PC-3 (cell line): ENCODE measurements at regions of chr1 and their contacts with region 1.

Region 1: DNA sequence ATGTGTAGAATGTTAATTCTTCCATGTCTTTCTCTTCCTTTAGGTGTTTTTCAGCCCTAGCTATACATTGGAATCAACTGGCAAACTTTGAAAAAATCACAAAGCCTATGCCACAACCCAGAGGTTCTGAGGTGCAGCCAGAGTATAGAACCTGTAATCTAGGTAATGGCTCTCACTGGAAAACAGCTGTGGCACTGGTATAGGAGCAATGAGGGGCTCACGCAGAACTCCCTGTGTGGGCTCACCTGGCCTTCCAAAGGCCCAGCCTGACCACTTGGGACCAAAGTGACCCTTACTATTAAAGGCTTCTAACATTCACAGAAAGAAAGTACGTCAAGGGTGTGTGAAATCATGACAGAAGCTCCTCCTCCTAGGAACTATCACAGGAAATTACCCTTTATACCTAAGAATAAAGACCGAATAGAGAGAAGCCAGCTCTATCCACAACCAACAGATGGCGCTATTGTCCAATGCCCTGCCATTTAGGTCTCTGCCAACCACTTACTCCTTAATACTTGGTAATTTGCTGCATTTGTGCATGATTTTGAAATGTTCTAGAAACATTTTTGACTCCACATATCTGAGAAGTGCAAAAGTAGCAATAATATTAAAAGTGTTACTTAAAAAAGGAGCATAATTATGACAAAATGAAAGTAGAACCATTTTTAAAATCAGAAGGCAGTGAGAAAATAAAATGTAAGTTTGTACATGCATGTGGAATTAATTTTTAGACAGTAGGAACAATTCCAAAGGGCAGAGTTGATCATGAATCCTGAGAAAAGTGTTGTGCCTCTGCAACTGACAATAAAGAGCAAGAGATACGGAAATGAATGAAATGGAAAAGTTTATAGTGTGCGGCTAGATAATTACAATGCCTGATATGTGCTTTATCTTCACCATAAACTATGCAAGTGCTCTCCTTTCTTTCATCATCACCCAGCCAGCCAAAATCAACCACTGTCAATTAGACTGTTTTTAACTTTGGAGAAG is 93.1 kb upstream of the HAO2 start:
- DNase-seq: peak; percentile 78
- ATAC-seq: peak; percentile 35; the same call in 1 of the 2 replicates
- H3K4me3 ChIP-seq: no peak overlapping the region
- H3K27ac ChIP-seq: no peak overlapping the region
- H3K4me1 ChIP-seq: peaks cover 17% of the 10 kb centered on the region
- H3K27me3 ChIP-seq: no peaks in the 10 kb centered on the region
- CTCF ChIP-seq: peak; percentile 94

Region 2: DNA sequence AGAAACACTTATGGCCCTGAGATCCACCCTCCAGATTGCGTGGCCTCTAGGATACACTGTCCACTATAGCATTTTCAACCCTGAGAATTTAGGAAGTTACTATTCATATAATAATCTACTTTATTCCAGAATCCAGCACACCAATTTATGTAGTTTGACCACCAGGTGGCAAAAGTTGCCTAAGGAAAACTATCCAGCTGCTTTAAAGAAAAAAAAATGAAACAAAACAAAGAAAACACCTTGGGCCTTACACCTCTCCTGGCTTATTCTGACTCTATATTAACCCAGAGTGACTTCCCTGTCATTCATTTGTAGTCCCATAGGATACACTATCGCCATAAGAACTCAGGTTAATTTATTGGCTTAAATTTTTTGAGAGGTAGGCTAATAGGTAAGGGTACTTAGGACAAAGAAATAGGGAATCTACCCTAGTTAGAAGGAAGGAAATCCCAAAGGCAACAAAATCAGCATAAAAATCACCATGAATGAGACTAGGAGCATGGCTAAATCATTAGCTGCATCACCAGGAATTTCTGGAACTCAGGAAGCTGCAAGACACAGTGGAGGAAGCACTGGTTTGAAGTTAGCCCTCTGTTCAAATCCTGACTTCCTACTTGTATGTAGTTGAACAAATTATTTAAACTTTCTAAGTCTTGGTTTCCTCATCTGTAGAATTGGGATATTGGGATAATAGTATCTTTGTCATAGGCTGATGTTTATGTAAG is 1197.9 kb before region 1 on chr1:
- CTCF ChIA-PET with region 1: no interaction called
- POLR2A ChIA-PET with region 1: no interaction called
- intact Hi-C with region 1: loop called (anchors 10 kb)
- DNase-seq: peak; percentile 68
- ATAC-seq: peak; percentile 18; the same call in 1 of the 2 replicates
- H3K4me3 ChIP-seq: no peak overlapping the region
- H3K27ac ChIP-seq: no peak overlapping the region
- H3K4me1 ChIP-seq: no peaks in the 10 kb centered on the region
- H3K27me3 ChIP-seq: no peaks in the 10 kb centered on the region
- CTCF ChIP-seq: peak; percentile 87

Region 3: DNA sequence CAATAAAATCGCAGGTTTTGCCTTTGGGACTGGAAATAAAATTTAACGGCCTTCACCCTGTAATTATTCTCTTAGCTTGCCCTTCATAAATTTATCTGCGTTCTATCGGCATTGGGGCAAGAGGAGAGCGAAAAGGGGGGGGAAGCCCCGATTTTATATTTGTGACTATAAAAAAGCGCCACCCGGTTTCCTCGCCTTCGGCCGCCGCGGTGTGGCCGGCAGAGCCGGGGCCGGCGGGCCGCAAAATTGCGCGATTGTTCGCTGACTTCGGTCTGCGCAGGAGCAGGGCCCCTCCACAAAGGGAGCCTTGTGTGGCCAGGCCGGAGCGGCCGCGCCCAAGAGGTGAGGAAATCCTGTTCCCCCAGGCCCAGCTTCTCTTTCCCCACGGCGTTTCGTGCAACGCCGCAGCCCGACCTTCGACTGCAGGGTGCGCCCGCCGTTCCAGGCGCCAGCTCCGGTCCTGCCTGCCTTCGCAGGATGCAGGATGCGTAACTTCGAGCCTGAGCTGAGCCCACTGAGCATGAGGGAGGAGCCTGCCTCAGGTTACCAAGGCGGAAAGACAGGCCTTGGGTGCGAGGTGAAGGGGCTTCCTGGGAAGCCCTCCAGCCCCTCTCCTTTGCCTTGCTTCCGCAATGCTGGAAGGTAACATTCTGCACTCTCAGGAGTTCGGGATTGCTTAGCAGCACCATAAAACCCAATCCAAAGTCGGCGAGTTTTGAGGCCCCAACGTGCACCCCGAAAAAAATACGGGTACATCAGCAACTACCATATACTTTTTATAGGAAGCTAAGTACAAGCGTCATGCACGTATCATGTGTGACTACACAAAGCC is 282.4 kb before region 1 on chr1:
- CTCF ChIA-PET with region 1: no interaction called
- POLR2A ChIA-PET with region 1: no interaction called
- intact Hi-C with region 1: no loop called
- DNase-seq: no peak
- ATAC-seq: no peak
- H3K4me3 ChIP-seq: no peak overlapping the region
- H3K27ac ChIP-seq: no peak overlapping the region
- H3K4me1 ChIP-seq: peaks cover 9% of the 10 kb centered on the region
- H3K27me3 ChIP-seq: no peaks in the 10 kb centered on the region
- CTCF ChIP-seq: no peak

Region 4: DNA sequence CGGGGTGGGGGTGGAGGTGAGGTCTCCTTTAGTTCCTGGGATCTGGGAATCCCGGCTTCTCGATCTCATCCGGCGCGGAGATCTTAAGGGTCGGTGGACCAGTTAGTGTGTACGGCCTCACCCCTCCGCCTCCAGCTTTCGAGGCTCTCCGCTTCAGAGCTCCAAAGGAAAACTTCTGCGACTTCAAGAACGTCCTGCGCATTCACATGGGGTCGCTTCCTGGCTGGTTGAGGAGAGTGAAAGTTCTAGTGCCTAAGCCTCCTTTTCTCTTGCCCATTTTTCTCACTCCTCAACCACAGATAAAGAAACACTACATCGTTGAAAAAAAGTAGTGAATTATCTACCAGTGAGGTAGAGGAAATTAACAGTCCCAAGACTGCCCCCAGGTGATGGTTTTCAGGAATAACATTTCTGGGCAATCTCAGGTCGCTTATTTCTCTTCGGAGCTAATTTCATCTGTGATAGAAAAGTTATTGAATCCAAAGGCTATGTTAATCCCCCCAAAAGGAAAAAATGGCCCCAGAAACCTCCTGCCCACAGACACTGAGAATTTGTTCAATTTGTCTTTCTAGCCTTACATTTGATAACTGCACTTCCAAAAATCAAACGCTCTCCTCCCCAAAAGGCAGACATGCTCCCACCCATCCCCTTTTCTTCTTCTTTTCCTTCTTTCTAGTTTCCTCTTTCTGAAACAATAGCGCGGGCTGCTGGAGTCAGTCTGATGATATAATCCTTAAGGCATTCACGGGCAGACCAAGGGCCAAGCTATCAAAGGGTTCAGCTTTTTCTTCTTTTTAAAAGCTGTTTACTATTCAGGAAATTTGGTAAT is 266.7 kb before region 1 on chr1:
- CTCF ChIA-PET with region 1: interaction called, 4 read pairs
- POLR2A ChIA-PET with region 1: no interaction called
- intact Hi-C with region 1: loop called (anchors 5 kb)
- DNase-seq: peak; percentile 73
- ATAC-seq: peak; percentile 57
- H3K4me3 ChIP-seq: no peak overlapping the region
- H3K27ac ChIP-seq: no peak overlapping the region
- H3K4me1 ChIP-seq: 0 out of 2 replicates have a peak, but pooled peaks cover 7% of the 10 kb centered on the region
- H3K27me3 ChIP-seq: no peaks in the 10 kb centered on the region
- CTCF ChIP-seq: peak; percentile 83

Region 5: DNA sequence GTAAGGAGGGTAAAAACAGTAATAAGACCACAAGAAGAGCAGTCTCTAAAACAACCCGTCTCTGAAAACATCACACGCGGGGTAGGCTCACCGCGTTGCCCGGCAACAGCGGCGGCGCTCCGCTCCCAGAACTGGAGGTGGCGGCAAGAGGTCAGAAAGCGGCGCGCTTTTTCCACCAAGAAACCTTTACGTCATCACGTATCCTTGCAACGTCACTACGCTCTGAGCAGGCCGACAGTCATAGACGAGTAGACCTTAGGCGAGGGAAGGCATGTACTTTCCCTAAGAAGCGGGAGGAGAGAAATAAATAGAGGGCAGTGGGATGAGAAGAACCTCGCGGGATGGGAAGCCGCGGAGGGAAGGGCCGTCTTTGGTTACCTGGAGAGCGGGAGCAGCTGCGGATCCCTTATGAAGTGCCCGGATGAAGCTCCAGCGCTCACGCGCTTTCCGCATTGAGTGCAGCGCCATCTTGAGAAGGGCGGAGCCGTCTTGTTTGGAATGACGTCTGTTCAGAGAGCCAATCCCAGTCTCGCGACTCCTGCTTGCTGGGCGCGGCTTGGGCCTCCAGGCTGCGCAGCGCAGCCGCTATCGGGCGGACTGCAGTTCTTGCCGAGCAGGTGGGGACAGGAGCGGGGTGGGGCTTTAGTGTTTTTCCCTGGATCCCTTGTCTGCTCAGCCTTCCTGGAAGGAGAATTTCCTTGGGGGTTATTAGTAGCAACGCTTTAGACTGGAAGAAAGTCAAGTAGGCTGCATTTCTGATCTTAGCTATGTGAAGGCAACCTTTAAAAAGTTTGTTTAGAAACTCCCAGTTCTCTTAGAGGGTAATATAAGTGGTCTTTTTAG is 135.0 kb before region 1 on chr1 and contains the start of gene WARS2:
- CTCF ChIA-PET with region 1: interaction called, 10 read pairs
- POLR2A ChIA-PET with region 1: no interaction called
- intact Hi-C with region 1: loop called (anchors 1 kb)
- DNase-seq: peak; percentile 97
- ATAC-seq: peak; percentile 97
- H3K4me3 ChIP-seq: peak within 1 kb of the TSS; percentile 74
- H3K27ac ChIP-seq: peak within 1 kb of the TSS; percentile 93
- H3K4me1 ChIP-seq: peaks cover 32% of the 10 kb centered on the region
- H3K27me3 ChIP-seq: no peaks in the 10 kb centered on the region
- CTCF ChIP-seq: no peak
- total RNA-seq, gene WARS2: 16.8 and 18.1 TPM in 2 replicates

Region 6: DNA sequence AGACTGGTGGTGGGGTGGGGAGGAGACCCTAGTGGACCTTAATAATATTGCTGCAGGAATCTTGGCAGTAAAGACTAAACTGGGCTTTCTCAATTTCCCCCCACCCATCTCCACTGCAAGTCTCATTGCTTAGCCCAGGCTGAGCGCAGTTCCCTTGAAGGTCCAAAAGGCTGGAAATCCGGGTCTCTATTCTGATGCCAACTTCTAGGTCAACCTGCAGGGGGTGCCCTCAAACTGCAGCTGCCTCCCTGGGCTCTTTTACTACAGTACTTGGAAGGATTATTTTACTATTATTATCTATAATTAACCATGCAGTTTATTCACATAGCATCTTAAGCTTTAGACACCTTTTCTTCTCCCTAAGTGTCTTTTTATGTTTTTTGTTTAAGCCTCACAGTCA is 49.6 kb before region 1 on chr1:
- CTCF ChIA-PET with region 1: no interaction called
- POLR2A ChIA-PET with region 1: no interaction called
- intact Hi-C with region 1: loop called (anchors 10 kb)
- DNase-seq: no peak
- ATAC-seq: no peak
- H3K4me3 ChIP-seq: no peak overlapping the region
- H3K27ac ChIP-seq: no peak overlapping the region
- H3K4me1 ChIP-seq: no peaks in the 10 kb centered on the region
- H3K27me3 ChIP-seq: no peaks in the 10 kb centered on the region
- CTCF ChIP-seq: peak; percentile 49

Region 7: GRCh38 chr1:119329541-119330461 is 54.4 kb after region 1 on chr1:
- CTCF ChIA-PET with region 1: no interaction called
- POLR2A ChIA-PET with region 1: no interaction called
- intact Hi-C with region 1: loop called (anchors 5 kb)
- DNase-seq: peak; percentile 74
- ATAC-seq: peak; percentile 91
- H3K4me3 ChIP-seq: no peak overlapping the region
- H3K27ac ChIP-seq: no peak overlapping the region
- H3K4me1 ChIP-seq: peaks cover 15% of the 10 kb centered on the region
- H3K27me3 ChIP-seq: peaks cover 17% of the 10 kb centered on the region; the same call in 1 of the 2 replicates
- CTCF ChIP-seq: no peak